Activated CD4-positive, alpha-beta T cell treated with anti-CD3 and anti-CD28 coated beads for 36 hours (primary cell): ENCODE measurements at regions of chr12 and their contacts with region 1.

Region 1: GRCh38 chr12:9897535-9897934 is 16.2 kb downstream of the KLRF2 start:
- DNase-seq: no peak
- ATAC-seq: no peak
- H3K4me3 Mint-ChIP-seq: no peak overlapping the region
- H3K27ac Mint-ChIP-seq: no peak overlapping the region
- H3K4me1 Mint-ChIP-seq: no peaks in the 10 kb centered on the region
- H3K27me3 Mint-ChIP-seq: no peaks in the 10 kb centered on the region

Region 2: DNA sequence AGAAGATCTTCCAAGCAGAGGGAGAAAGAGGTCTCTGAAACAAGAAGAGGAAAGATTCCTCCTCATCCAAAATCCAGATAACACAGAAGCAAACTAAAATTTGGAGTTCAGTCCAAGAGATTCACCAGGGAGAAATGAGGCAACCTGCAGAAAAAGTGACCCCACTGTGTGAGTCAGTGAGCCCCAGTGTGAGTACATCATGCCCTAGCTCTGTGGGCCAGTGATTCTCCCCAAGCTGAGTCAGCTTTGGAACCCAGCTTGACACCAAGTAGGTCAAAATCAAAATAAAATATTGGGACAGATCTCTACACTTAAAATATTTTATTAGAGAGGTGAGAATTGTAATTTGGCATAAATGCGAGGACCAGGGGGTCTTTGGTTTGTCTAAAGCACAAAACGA is 45.6 kb before region 1 on chr12:
- CTCF ChIA-PET with region 1: no interaction called
- POLR2A ChIA-PET with region 1: no interaction called
- intact Hi-C with region 1: no loop called
- DNase-seq: no peak
- ATAC-seq: no peak
- H3K4me3 Mint-ChIP-seq: no peak overlapping the region
- H3K27ac Mint-ChIP-seq: no peak overlapping the region
- H3K4me1 Mint-ChIP-seq: peaks cover 18% of the 10 kb centered on the region
- H3K27me3 Mint-ChIP-seq: no peaks in the 10 kb centered on the region

Region 3: DNA sequence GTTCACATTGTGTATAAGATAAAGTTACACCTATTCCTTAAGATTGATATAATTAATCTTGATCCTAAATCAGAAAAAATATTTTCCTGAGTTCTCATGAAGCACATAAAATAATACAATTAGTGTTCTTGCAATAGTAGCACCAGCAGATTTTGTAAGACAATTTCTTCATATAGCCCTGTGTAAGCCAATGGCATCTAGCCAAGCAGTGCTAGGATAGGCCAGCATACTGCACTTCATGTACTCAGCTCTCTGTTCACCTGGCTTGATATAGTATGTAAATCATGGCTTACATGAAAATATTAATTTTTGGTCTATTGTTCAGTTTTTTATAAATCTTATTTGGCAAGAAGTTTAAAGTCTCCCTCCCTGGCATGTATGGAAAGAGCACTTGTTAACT is 14.4 kb before region 1 on chr12:
- CTCF ChIA-PET with region 1: interaction called, 9 read pairs
- POLR2A ChIA-PET with region 1: no interaction called
- intact Hi-C with region 1: loop called in 1 of 2 experiments (anchors 1 kb)
- DNase-seq: no peak
- ATAC-seq: no peak
- H3K4me3 Mint-ChIP-seq: no peak overlapping the region
- H3K27ac Mint-ChIP-seq: no peak overlapping the region
- H3K4me1 Mint-ChIP-seq: peaks cover 5% of the 10 kb centered on the region
- H3K27me3 Mint-ChIP-seq: no peaks in the 10 kb centered on the region

Region 4: GRCh38 chr12:9948606-9949296 is 51.2 kb after region 1 on chr12:
- CTCF ChIA-PET with region 1: no interaction called
- POLR2A ChIA-PET with region 1: no interaction called
- intact Hi-C with region 1: no loop called
- DNase-seq: no peak
- ATAC-seq: peak; percentile 95
- H3K4me3 Mint-ChIP-seq: no peak overlapping the region
- H3K27ac Mint-ChIP-seq: peak overlapping the region; percentile 9
- H3K4me1 Mint-ChIP-seq: peaks cover 47% of the 10 kb centered on the region
- H3K27me3 Mint-ChIP-seq: no peaks in the 10 kb centered on the region